Gastrocnemius medialis (tissue), 4 donors: ENCODE measurements at regions of chr1 and their contacts with region 1.

Region 1: DNA sequence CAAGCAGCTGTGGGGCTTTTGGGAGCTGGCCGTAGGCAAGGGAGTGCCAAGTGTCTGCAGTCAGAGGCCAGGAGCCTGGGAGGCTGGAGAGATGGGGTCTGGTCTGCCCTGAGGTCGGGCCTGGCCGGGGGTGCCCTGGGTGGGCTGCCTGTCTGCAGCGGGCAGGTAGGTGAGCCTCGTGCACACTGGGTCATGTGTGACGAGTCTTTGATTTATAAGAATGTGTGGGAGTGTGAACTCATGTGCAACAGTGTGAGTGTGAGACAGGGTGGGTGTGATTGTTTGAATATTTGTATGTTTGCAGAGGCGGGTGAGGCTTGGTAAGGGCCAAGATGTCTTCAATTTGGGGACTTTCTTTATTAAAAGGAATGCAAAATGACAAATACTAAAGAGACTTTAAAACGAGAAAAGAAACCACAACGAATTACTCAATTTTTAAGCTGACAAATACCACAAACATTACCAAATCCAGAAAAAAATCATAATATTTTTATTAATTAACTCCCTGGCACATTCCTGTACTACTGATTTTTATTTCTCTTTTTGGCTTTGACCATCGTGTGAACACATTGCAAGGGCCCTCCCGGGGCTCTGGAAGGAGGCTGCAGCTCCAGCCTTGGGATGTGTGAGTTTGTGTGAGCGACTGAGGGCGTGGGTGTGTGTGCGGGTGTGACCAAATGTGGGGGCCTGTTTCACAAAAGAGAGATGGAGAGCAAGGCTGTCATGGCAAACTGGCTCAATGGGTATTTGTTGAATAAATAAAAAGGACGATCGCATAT is 110.3 kb upstream of the WNT4 start:
- DNase-seq: no peak
- ATAC-seq: no peak
- H3K4me3 ChIP-seq: no peak overlapping the region
- H3K27ac ChIP-seq: no peak overlapping the region
- H3K4me1 ChIP-seq: peaks cover 0 to 27% of the 10 kb centered on the region in 2 donors
- H3K27me3 ChIP-seq: peaks cover 0 to 7% (median 0%) of the 10 kb centered on the region in 3 donors
- CTCF ChIP-seq: no peak
- POLR2A ChIP-seq: no peak

Region 2: GRCh38 chr1:22197644-22198043 is 55.6 kb before region 1 on chr1:
- in situ Hi-C with region 1: no loop called
- intact Hi-C with region 1: loop called (anchors 2 kb)
- DNase-seq: no peak
- ATAC-seq: no peak
- H3K4me3 ChIP-seq: no peak overlapping the region
- H3K27ac ChIP-seq: no peak overlapping the region
- H3K4me1 ChIP-seq: no peaks in the 10 kb centered on the region
- H3K27me3 ChIP-seq: peaks cover 0 to 6% (median 3%) of the 10 kb centered on the region in 3 donors
- CTCF ChIP-seq: no peak
- POLR2A ChIP-seq: no peak

Region 3: GRCh38 chr1:22562584-22563583 is 309.7 kb after region 1 on chr1 and contains the start of gene EPHA8:
- in situ Hi-C with region 1: no loop called
- intact Hi-C with region 1: loop called (anchors 10 kb)
- DNase-seq: no peak
- ATAC-seq: no peak
- H3K4me3 ChIP-seq: no peak within 1 kb of the TSS
- H3K27ac ChIP-seq: no peak within 1 kb of the TSS
- H3K4me1 ChIP-seq: no peaks in the 10 kb centered on the region
- H3K27me3 ChIP-seq: peaks cover 24 to 41% (median 31%) of the 10 kb centered on the region in 3 donors
- CTCF ChIP-seq: no peak
- POLR2A ChIP-seq: no peak
- total RNA-seq, gene EPHA8: not detected